Esophagus muscularis mucosa (tissue), 4 donors: ENCODE measurements at regions of chr11 and their contacts with region 1.

Region 1: DNA sequence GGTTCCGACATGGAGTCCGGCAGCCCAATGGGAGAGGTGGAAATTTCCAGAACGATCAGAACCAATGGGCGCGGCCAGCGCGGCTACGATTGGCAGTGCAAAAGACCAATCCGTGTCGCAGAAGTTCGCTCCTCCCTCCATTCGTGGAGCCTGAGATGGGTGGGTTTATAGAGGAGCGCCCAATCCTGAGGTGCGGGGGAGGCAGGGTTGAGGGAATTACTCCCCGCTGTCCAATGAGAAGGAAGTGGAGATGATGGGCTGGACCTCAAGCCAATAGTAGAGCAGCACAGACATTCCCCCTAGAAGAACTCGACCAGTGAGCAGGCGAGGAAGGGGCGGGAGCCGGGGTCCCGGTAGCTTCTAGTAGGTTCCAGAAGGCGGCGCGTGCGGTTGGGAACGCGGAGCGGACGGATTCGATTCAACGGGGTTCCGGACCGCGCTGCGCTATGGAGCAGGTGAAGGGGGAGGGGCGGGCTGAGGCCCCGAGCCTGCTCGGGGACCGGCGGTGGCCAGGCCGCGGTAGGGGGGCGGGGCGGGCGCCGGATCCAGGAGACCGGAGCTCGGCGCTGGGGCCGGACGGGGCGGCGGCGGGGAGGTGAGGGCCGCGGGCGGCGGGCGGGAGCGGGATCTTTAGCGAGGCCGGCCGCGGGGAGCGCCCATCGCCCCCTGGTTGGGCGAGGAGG is at the start of gene STIP1:
- DNase-seq: peak; percentile 100
- H3K4me3 ChIP-seq: peak within 1 kb of the TSS in 2 of 4 donors; percentile 72 to 80
- H3K27ac ChIP-seq: peak within 1 kb of the TSS in 3 of 4 donors; percentile 88 to 96 (median 96)
- H3K4me1 ChIP-seq: peaks cover 39 to 47% (median 44%) of the 10 kb centered on the region in 4 donors
- H3K27me3 ChIP-seq: peaks cover 0 to 4% (median 0%) of the 10 kb centered on the region in 4 donors
- CTCF ChIP-seq: peak in 2 of 3 experiments; percentile 40 to 57
- EP300 ChIP-seq: no peak
- POLR2A ChIP-seq: no peak
- total RNA-seq, gene STIP1: 82.2 to 116 (median 101) TPM

Region 2: GRCh38 chr11:63813035-63813562 is 372.9 kb before region 1 on chr11 and contains the start of gene SPINDOC:
- intact Hi-C with region 1: no loop called
- DNase-seq: peak; percentile 93
- H3K4me3 ChIP-seq: peak within 1 kb of the TSS; percentile 77 to 98 (median 92)
- H3K27ac ChIP-seq: peak within 1 kb of the TSS; percentile 87 to 91 (median 88)
- H3K4me1 ChIP-seq: peaks cover 17 to 50% (median 37%) of the 10 kb centered on the region in 4 donors
- H3K27me3 ChIP-seq: no peaks in the 10 kb centered on the region
- CTCF ChIP-seq: no peak
- EP300 ChIP-seq: no peak
- POLR2A ChIP-seq: no peak
- total RNA-seq, gene SPINDOC: 12.0 to 25.8 (median 18.6) TPM

Region 3: DNA sequence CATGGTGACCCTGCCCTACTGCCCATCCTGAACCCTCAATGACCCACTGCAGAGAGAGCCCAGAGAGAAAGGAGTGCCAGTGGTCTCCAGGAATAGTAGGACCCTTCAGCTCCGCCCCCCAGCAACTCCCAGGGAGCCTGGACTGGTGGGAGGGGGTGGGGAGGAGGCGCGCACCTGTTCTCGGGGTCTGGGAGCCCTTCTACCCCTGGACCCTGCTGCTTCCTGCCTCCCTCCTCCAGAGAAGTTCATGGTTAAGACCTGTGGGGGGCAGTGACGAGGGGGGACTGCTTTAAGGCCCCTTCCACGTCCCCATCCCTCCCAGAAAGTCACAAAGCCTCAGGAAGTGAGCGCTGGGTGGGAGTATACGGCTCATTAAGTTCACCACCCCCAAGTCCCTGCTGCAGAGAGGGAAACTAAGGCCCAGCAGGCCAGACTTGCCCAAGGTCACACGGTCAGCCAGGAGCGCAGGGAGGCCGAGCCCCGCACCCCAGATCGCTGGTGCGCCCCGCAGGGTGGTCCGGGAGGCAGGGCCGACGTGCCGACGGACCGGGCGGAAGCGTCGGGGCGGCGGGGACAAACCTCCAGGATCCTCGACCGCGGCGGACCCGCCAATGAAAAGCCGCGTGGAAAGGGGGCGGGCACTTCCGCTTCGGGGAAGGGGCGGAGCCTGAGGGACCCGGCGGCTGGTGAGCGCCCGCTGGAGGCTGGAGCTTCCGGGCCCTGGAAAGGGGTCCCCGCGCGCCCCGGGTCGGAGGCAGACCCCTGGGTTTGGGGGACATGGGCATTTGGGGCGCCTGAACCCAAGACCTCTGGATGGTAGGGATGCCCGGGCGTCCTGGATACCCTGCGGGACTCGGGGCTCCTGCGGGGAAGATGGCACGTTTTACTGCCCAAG is 39.9 kb after region 1 on chr11 and contains the starts of genes NUDT22 and TRPT1:
- intact Hi-C with region 1: loop called (anchors 5 kb)
- DNase-seq: peak; percentile 98
- H3K4me3 ChIP-seq: peak within 1 kb of the TSS; percentile 69 to 80 (median 71)
- H3K27ac ChIP-seq: peak within 1 kb of the TSS; percentile 87 to 93 (median 90)
- H3K4me1 ChIP-seq: peaks cover 30 to 57% (median 51%) of the 10 kb centered on the region in 4 donors
- H3K27me3 ChIP-seq: no peaks in the 10 kb centered on the region
- CTCF ChIP-seq: peak in 2 of 3 experiments; percentile 22 to 36
- EP300 ChIP-seq: no peak
- POLR2A ChIP-seq: peak; percentile 94
- total RNA-seq, gene NUDT22: 37.8 to 58.7 (median 48.6) TPM
- total RNA-seq, gene TRPT1: 42.3 to 90.5 (median 72.1) TPM